ENCODE measurements at regions of chr16 and their contacts with region 1.

Region 1: DNA sequence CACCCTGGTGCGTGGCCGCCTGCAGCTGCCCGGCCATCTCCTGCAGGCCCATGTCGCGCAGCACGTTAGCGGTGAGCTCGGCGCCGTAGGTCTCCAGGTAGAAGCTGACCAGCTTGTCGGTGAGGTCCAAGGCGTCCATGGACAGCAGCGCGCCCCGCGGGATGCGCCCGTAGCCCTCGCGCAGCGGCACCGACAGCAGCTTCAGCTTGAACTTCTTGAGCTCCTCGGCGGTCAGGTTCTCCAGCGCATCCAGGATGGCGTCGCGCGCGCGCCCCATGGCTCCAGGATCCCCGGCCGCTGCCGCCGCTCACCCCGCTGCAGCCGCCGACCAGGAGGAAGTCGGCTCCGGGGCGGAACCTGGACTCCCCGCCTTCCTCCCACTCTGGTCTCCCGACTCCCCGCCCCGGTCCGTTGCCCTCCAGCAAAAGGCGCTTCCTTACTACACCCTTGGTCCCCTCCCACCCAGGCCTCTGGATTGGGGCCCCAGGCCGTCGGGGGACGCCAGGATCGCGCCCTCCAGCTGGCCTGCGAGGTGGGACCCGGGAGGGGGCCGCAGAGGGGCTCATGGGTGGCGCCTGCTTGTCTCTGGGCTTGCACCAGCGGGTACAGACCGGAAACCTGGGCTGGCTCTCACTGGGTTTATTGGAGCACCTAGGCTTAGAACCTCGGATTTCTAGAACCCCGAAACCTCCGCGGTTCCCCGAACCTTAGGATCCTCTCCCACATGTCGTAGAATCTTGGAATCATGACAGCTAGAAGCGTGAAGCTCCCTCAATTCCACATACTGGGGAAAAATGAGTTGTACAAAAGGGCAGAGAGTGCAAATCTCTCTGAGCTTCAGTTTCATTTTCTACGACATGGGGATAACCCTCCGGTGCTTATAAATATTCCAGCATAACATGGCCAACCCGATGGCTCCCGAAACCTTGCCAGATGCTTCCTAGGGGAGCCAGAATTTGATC is at the start of gene PYCARD:
- DNase-seq: peak; percentile 71
- ATAC-seq: peak; percentile 25
- H3K4me3 Mint-ChIP-seq: peak within 1 kb of the TSS; percentile 90
- H3K27ac Mint-ChIP-seq: peak within 1 kb of the TSS; percentile 86
- H3K4me1 Mint-ChIP-seq: peaks cover 50% of the 10 kb centered on the region
- H3K27me3 Mint-ChIP-seq: peaks cover 12% of the 10 kb centered on the region
- total RNA-seq, gene PYCARD: 82.3 to 87.0 TPM

Region 2: GRCh38 chr16:31142109-31143010 is 60.3 kb before region 1 on chr16:
- POLR2A ChIA-PET with region 1: interaction called, 11 read pairs
- DNase-seq: peak; percentile 98
- ATAC-seq: peak; percentile 87
- H3K4me3 Mint-ChIP-seq: peak overlapping the region; percentile 86
- H3K27ac Mint-ChIP-seq: peak overlapping the region; percentile 89
- H3K4me1 Mint-ChIP-seq: peaks cover 5% of the 10 kb centered on the region
- H3K27me3 Mint-ChIP-seq: peaks cover 1% of the 10 kb centered on the region

Region 3: GRCh38 chr16:31186176-31186575 is 16.5 kb before region 1 on chr16:
- POLR2A ChIA-PET with region 1: interaction called, 30 read pairs
- DNase-seq: no peak
- ATAC-seq: peak; percentile 15
- H3K4me3 Mint-ChIP-seq: peak overlapping the region; percentile 62
- H3K27ac Mint-ChIP-seq: peak overlapping the region; percentile 74
- H3K4me1 Mint-ChIP-seq: peaks cover 74% of the 10 kb centered on the region
- H3K27me3 Mint-ChIP-seq: no peaks in the 10 kb centered on the region

Region 4: DNA sequence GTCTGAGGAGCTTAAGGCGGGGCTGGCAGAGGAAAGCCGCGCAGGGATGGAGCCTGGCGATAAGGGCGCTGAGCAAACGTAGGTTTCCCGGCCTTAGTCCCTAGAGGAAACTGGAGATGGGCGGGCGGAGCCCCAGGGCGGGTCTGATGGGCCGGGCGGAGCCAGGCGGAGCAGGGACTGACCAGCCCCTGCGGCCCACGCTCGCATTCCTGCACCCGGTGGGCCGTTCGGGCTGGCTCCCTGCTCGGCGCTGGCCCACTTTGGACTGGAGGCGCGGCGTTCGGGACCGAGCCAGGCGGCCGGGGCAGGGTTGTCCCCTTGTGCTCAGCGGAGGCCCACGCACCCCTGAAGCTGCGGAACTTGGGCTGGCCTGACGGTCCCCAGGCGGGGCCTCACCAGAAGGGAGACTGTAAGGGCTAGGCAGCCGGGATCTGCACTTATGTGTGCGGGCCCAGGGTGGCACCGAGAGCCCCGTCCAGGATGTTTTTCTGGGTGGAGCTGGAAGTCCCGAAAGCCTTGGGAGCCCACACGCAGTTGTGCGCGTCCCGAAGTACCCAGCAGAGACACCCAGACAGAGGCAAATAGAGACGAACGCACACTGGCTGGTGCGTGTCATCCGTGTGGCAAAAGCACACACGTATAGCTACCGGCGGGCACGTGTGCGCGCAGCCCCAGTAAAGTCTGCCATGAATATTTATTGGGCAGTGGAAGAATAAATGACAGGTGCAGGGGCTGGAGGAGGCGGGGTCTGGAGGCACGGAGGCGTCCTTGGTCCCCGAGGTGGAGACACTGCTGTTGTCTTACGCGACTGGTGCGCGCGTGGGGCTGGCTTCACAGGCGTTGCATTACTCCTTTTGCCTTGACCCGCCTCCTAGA is 12.8 kb after region 1 on chr16:
- POLR2A ChIA-PET with region 1: interaction called, 37 read pairs
- DNase-seq: no peak
- ATAC-seq: peak; percentile 51
- H3K4me3 Mint-ChIP-seq: peak overlapping the region; percentile 72
- H3K27ac Mint-ChIP-seq: peak overlapping the region; percentile 13
- H3K4me1 Mint-ChIP-seq: peaks cover 13% of the 10 kb centered on the region
- H3K27me3 Mint-ChIP-seq: peaks cover 49% of the 10 kb centered on the region

Region 5: DNA sequence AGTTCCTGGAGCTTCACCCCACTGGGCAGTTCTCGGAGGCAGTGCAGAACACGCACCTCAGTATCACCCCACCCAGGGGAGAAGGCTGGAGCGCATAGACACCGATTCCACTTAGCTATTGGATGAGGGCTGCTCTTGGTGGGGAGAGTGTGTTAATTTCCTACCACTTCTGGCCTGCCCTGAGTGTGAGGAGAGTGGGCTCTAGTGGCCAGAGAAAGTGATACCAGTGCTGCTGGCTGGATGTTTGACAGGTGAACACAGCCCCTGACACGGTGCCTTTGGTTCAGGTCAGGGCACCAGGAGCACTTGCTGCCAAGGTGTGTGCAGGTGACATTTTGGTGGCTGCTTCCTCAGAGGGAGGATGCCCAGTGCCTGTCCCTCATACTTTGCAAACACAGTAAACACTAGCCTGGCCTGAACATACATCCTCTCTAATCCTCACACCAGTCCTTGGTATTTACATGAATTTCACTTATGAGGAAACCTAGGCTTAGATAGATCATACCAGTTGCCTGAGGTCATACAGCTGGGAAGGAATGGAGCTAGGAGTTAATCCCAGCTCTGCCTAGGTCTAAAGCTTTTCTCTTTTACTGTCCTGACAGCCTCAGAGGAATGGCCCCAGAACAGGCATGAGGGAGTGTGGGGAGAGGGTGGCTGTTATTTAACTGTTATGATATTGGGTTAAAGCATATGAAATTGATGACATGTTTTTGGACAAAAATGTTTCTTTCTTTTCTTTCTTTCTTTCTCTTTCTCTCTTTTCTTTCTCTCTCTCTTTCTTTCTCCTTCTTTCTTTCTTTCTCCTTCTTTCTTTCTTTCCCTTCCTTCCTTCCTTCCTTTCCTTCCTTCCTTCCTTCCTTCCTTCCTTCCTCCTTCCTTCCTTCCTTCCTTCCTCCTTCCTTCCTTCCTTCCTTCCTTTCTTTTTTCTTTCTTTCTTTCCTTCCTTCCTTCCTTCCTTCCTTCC is 131.3 kb after region 1 on chr16:
- POLR2A ChIA-PET with region 1: interaction called, 16 read pairs
- DNase-seq: peak; percentile 48
- ATAC-seq: peak; percentile 83
- H3K4me3 Mint-ChIP-seq: no peak overlapping the region
- H3K27ac Mint-ChIP-seq: peak overlapping the region; percentile 69
- H3K4me1 Mint-ChIP-seq: peaks cover 21% of the 10 kb centered on the region
- H3K27me3 Mint-ChIP-seq: peaks cover 10% of the 10 kb centered on the region

Region 6: GRCh38 chr16:31382485-31383161 is 179.9 kb after region 1 on chr16:
- POLR2A ChIA-PET with region 1: interaction called, 14 read pairs
- DNase-seq: peak; percentile 76
- ATAC-seq: peak; percentile 86
- H3K4me3 Mint-ChIP-seq: no peak overlapping the region
- H3K27ac Mint-ChIP-seq: no peak overlapping the region
- H3K4me1 Mint-ChIP-seq: peaks cover 32% of the 10 kb centered on the region
- H3K27me3 Mint-ChIP-seq: peaks cover 14% of the 10 kb centered on the region

Region 7: GRCh38 chr16:31873556-31874365 is 671.1 kb after region 1 on chr16 and contains the start of gene ZNF267:
- POLR2A ChIA-PET with region 1: interaction called, 10 read pairs
- DNase-seq: peak; percentile 84
- ATAC-seq: peak; percentile 66
- H3K4me3 Mint-ChIP-seq: peak within 1 kb of the TSS; percentile 91
- H3K27ac Mint-ChIP-seq: peak within 1 kb of the TSS; percentile 97
- H3K4me1 Mint-ChIP-seq: peaks cover 63% of the 10 kb centered on the region
- H3K27me3 Mint-ChIP-seq: no peaks in the 10 kb centered on the region
- total RNA-seq, gene ZNF267: 60.9 to 62.6 TPM